Mammary epithelial cell (primary cell): ENCODE measurements at regions of chr2 and their contacts with region 1.

Region 1: DNA sequence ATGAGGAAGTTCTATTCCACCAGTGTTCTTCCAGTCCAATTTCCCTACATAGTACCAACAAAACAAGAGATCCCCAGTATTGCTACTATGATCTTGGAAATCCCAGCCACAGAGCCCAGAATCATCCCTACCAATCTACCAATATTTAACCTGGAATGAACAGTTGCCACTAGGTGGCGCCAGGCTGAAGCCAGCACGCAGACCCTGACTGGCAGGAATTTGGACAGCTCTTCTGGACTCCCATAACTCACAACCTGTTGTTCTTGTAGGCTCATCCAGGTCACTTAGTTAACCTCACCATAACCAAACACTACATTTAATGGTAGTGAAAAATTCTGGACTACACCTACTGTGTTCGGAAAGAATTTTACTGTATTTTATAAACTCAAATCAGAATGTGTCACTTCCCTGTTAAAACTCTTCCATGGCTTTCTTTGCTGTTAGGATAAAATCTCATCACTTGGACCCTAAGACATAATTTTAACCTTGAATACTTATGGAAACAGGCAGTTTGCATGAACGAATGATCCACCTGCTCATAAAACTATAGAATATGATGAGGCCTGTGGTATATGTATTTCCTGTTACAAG is 59.8 kb upstream of the SLC38A11 start:
- DNase-seq: peak; percentile 49
- H3K4me3 ChIP-seq: no peak overlapping the region
- H3K27ac ChIP-seq: no peak overlapping the region
- H3K4me1 ChIP-seq: peaks cover 18% of the 10 kb centered on the region
- H3K27me3 ChIP-seq: no peaks in the 10 kb centered on the region
- CTCF ChIP-seq: peak; percentile 93 to 94

Region 2: GRCh38 chr2:164737612-164738081 is 277.5 kb before region 1 on chr2:
- CTCF ChIA-PET with region 1: no interaction called
- dilution Hi-C with region 1: no loop called
- in situ Hi-C with region 1: no loop called
- intact Hi-C with region 1: loop called (anchors 5 kb)
- DNase-seq: peak; percentile 65
- H3K4me3 ChIP-seq: no peak overlapping the region
- H3K27ac ChIP-seq: peak overlapping the region; percentile 24
- H3K4me1 ChIP-seq: peaks cover 34% of the 10 kb centered on the region
- H3K27me3 ChIP-seq: no peaks in the 10 kb centered on the region
- CTCF ChIP-seq: peak; percentile 68 to 69

Region 3: DNA sequence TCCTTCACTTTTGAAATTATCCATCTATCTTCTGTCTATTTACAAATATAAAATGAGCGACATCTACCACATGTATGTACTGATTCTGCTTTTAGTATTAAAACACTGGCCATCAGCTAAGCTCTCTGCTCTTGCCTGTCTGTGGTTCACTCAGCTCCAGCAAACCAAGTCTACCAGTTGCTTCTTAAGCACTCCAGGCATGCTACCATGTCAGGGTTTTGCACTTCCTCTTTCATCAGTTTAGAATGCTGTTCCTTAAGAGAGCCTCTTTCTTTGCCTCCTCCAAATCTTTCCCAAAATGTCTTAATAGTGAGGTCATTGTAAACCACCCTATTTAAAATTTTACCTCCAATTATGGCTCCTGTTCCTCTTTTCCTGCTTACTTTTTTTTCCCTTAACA is 129.2 kb after region 1 on chr2:
- CTCF ChIA-PET with region 1: no interaction called
- dilution Hi-C with region 1: no loop called
- in situ Hi-C with region 1: no loop called
- intact Hi-C with region 1: loop called (anchors 5 kb)
- DNase-seq: no peak
- H3K4me3 ChIP-seq: no peak overlapping the region
- H3K27ac ChIP-seq: no peak overlapping the region
- H3K4me1 ChIP-seq: no peaks in the 10 kb centered on the region
- H3K27me3 ChIP-seq: no peaks in the 10 kb centered on the region
- CTCF ChIP-seq: no peak

Region 4: DNA sequence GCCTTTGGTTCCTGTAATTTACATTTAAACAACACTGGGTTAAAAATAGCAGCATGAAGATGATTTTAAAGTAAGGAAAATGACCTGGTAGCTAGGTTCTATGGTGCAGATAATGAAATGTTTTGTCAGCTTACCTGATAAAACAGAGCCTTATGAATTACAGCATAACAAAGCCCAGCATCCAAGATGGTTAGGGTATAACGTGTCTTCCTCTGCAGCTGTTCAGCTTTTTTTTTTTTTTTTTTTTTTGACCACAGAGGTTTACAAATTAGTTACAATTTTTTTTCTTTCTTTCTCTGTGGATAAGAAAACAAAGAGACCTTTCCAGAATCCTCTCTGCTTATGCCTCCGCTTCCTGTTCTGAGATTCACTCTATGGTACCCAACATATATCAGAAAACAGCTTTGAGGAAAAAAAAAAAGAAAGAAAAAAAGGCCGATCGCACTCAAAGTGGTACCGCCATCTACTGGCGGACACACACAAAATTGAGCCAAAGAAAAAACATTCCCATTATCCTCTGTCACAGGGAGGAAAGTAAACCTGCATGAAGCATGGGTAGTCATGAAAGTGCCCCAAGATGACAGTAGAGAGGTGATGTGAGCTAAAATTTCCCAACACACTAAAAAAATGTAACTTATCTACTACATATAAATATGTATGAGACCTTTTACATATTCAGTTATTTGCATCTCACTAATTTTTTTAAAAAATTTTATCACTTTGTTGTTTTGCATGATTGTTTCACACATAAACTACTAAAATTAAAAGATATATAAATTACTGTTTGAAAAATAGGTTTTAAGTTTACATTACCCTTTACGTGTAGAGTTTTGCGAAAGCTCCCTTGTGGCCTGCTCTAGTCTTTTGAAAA is 188.8 kb after region 1 on chr2 and contains the start of gene SCN3A:
- CTCF ChIA-PET with region 1: interaction called, 21 read pairs
- dilution Hi-C with region 1: no loop called
- in situ Hi-C with region 1: loop called in 1 of 2 experiments (anchors 10 kb)
- intact Hi-C with region 1: loop called (anchors 1 kb)
- DNase-seq: peak; percentile 37
- H3K4me3 ChIP-seq: no peak within 1 kb of the TSS
- H3K27ac ChIP-seq: no peak within 1 kb of the TSS
- H3K4me1 ChIP-seq: peaks cover 2% of the 10 kb centered on the region
- H3K27me3 ChIP-seq: no peaks in the 10 kb centered on the region
- CTCF ChIP-seq: peak; percentile 73 to 80
- total RNA-seq, gene SCN3A: not detected

Region 5: GRCh38 chr2:165293440-165294353 is 278.6 kb after region 1 on chr2:
- CTCF ChIA-PET with region 1: interaction called, 3 read pairs
- dilution Hi-C with region 1: no loop called
- in situ Hi-C with region 1: no loop called
- intact Hi-C with region 1: loop called (anchors 2 kb)
- DNase-seq: peak; percentile 88
- H3K4me3 ChIP-seq: peak overlapping the region; percentile 62 to 95 (median 93)
- H3K27ac ChIP-seq: no peak overlapping the region
- H3K4me1 ChIP-seq: peaks cover 6% of the 10 kb centered on the region
- H3K27me3 ChIP-seq: no peaks in the 10 kb centered on the region
- CTCF ChIP-seq: peak; percentile 84 to 96

Region 6: DNA sequence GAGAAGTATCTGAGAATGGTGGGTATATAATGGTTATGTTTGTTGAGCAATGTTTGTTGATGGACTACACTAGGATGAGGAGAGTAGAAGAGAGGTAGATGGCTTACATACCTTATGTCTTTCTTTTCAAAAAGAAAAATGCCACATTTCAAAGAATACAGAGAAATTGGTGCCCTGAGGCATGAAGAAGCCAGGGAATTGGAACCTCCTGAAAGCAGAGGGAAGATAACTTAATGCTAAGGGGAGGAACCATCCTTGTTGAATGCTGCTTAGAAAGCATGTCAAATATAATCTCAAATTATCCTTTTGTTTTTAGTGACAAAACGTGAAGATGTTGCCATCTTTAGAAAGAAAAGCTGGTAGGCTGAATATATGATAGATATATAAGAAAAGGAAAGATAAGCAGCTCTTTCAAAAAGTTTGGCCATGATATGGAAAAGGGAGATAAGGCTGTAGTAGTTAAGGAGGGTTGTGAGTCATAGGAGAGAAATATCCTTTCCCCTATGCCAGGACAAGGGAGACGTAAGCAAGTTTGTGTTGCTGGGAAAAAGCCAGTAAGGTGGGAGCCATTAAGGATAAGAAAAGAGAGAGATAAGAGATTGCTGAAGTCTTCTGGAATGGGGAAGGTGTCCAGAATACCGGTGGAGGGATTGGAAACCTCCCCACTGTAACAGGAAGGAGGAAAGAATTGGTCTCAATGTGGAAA is 290.4 kb after region 1 on chr2:
- CTCF ChIA-PET with region 1: interaction called, 4 read pairs
- dilution Hi-C with region 1: no loop called
- in situ Hi-C with region 1: no loop called
- intact Hi-C with region 1: loop called (anchors 5 kb)
- DNase-seq: no peak
- H3K4me3 ChIP-seq: no peak overlapping the region
- H3K27ac ChIP-seq: no peak overlapping the region
- H3K4me1 ChIP-seq: no peaks in the 10 kb centered on the region
- H3K27me3 ChIP-seq: no peaks in the 10 kb centered on the region
- CTCF ChIP-seq: no peak

Region 7: DNA sequence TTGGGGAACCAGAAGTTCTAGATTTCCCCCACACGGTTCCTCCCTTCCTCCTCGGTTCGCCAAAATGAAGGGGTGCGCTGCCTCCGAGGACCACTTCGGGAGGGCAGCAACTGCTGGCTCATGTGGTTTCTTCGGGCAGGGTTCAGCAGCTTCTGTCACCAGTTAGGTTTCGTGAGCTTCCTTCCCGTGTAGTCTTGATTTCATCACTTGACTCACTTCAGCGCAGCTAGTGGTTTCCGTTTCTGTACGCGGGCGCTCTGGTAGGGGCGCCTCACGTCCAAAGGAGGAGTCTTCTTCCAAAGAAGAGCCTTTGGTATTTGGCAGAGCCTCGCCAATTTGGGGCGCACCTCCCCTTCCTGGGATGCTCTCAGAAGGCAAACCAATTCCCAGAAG is 779.4 kb after region 1 on chr2:
- CTCF ChIA-PET with region 1: no interaction called
- dilution Hi-C with region 1: no loop called
- in situ Hi-C with region 1: no loop called
- intact Hi-C with region 1: loop called (anchors 5 kb)
- DNase-seq: peak; percentile 87
- H3K4me3 ChIP-seq: peak overlapping the region; percentile 74 to 96 (median 80)
- H3K27ac ChIP-seq: peak overlapping the region; percentile 96
- H3K4me1 ChIP-seq: peaks cover 15% of the 10 kb centered on the region
- H3K27me3 ChIP-seq: no peaks in the 10 kb centered on the region
- CTCF ChIP-seq: no peak

Region 8: DNA sequence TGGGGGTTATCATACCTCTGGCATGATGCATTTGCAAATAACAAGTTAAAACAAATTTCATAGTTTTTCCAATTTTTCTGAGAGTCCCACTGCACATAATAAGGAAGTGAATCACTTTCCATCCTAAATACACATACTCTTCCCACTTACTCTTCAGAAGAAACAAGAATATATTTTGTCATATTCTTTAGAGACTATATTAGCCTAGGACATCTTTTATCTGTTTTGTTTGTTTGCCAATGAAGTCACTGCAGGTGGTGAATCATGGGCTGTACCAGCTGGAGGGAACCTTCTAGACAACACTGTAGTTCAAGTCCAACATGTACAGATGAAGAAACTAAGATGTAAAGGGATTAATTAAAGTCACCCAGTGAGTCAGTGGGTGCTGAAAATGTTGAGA is 1989.9 kb after region 1 on chr2:
- CTCF ChIA-PET with region 1: no interaction called
- dilution Hi-C with region 1: no loop called
- in situ Hi-C with region 1: no loop called
- intact Hi-C with region 1: no loop called
- DNase-seq: peak; percentile 2
- H3K4me3 ChIP-seq: no peak overlapping the region
- H3K27ac ChIP-seq: no peak overlapping the region
- H3K4me1 ChIP-seq: no peaks in the 10 kb centered on the region
- H3K27me3 ChIP-seq: no peaks in the 10 kb centered on the region
- CTCF ChIP-seq: no peak